Cardiac septum (tissue), 1 donor: ENCODE measurements at regions of chr1 and their contacts with region 1.

Region 1: DNA sequence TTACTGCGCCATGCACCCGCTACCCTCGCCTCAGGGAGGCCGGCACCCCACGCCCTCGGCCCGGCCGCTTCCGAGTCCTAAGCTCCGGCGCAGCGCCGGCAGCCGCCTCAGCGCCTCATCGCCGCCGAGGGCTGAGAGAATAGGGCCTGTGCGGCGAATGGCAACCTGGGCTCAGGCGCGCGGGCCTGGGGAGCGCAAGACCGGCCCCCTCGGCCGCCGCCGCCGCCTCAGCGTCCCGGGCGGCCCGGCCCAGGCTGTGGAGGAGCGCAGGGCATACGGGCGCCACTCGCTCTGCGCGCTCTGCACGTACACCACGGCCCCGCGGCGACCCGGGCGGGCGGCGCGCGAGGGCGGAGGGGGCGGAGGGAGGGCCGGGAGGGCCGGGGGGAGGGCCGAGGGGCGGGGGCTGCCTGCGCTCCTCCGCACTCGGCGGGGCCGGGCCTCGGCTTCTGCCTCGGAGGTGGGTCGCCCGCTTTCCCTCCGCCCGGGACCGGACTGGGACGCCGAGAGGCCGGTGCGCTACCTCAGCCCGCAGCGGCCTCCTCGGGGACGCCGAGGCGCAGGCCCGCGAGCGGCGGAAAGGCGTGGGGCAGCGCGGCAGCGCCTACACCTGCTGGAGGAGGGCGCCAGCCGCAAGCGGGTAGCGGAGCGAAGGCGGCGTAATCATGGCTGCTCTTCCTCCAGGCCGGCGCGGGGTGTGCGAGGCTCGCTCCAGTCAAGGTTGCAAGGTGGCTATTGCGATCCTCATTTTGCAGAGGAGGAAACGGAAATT is at the start of gene EGLN1:
- DNase-seq: peak; percentile 93
- total RNA-seq, gene EGLN1: 47.5 TPM

Region 2: DNA sequence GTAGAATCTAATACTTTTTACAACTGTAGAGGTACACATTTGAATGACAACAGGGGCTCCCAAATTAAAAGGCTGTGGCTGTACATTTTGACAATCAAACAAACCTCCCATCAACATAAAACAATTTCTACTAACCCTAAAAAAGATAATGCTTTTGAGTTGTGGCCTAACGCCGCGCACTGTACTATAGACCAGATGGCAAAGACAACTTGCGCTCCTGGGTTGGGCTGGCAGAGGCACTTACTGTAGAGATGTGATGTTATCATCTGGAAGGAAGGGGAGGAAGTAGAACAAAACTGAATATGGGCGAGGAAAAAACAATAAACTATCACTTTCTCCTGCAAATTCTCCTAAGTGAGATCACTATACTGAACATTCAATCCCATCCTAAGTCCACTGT is 58.0 kb before region 1 on chr1:
- intact Hi-C with region 1: loop called (anchors 5 kb)
- DNase-seq: no peak

Region 3: DNA sequence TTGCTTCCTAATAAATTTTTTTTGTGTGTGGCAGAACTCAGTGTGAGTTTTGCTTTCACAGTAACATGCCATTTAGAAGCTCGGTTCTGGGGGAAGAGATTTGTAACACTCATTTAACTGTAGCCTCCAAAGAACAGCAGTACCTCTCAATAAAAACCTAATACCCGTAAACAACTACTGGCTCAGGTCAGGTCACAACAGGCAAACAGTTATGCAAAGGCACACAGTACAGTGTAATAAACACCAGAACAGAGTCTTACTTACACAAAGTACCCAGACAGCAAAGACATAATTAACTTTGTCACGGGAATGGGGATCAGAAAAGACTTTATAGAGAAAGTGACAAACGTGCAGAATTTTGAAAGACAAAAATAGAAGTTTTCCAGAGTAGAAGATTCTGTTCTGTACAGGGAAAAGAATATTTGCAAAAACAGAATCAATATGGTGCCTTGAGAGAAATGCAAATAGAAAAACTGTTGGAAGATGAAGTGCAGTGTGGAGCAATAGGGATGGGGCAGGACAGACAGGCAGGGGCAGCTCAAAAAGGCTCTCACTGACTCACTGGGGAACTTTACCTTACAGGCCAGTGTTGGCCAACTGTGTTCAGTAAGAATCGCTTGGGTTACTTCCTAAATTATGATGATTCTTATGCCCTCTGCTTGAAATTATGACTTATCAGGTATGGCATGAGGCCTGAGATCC is 38.9 kb before region 1 on chr1:
- intact Hi-C with region 1: loop called (anchors 5 kb)
- DNase-seq: no peak

Region 4: GRCh38 chr1:231528172-231529029 is 106.2 kb after region 1 on chr1 and contains the start of gene TSNAX:
- intact Hi-C with region 1: loop called (anchors 5 kb)
- DNase-seq: peak; percentile 94
- total RNA-seq, gene TSNAX: 35.3 TPM

Region 5: DNA sequence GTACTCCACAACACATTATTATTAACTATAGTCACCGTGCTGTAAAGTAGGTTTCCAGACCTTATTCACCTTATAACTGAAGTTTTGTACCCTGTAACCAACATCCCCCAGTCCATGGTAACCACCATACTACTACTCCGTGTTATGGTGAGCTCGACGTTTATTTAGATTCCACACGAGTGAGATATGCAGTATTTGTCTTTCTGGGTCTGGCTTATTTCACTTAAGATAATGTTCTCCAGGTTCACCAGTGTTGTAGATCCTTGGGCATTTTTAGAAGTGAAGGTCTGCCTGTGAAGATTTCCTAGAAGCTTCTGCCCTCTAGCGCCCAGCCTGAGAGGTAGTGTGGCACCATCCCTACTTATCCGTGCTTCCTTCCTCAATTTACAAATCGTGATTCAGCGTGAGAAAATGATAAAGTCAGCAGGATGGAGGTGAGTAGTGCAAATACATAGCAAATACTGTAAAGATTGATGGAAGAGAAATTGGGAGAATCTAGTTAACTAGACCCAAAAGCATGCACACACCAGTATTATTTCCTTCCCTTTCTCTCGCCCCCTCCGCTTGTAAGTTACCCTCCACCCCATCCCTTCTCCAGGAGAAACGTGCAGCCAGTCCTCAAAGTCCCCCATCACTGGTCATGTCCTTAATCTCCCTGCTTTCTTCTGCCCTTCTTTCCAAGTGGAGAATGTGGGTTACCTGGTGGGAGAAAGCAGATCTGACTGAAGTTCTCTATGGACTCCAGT is 168.4 kb after region 1 on chr1:
- intact Hi-C with region 1: loop called (anchors 5 kb)
- DNase-seq: no peak